ENCODE measurements at regions of chr7 and their contacts with region 1.

Region 1: DNA sequence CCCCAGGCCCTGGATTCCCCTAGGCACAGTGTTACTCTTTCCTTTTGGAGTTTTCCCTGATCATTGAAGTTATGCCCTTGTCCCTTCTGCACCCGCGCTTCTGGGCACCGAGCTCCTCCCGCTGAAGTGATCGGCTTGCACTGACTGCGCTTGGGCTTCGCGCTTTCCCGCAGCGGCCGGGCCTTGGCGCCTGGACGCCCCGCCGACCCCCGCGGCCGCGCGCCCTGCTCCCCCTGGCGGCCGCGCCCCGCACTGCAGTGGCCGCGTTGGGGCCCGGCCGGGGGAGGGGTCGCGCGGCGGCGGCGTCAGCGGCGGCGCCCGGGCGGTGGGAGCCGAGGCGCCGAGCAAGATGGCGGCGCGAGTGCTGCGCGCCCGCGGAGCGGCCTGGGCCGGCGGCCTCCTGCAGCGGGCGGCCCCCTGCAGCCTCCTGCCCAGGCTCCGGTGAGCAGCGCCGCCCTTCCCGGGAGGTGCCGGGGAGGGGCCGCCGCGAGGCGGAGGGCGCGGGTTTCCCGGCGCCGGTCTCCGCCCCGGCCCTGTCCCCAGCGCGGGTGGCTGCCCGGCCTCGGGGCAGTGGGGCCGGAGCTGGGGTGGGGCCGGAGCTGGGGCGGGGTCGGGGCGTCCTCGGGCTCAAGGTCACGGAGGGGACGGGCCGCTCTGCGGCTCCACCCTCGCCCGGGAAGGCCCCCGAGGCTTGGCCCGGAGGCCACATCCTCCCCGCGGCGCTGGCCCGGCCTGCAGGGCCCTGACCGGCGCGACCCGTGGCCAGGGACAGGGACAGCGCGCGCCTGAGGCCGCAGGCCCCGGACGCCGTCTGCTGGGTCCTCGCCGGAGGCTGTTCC is at the start of gene NIPSNAP2:
- DNase-seq: peak; percentile 46
- H3K4me3 Mint-ChIP-seq: peak within 1 kb of the TSS; percentile 77
- H3K27ac Mint-ChIP-seq: peak within 1 kb of the TSS; percentile 79
- H3K4me1 Mint-ChIP-seq: peaks cover 36% of the 10 kb centered on the region
- H3K27me3 Mint-ChIP-seq: no peaks in the 10 kb centered on the region
- total RNA-seq, gene NIPSNAP2: 57.3 to 57.6 TPM

Region 2: GRCh38 chr7:55898287-55898686 is 66.2 kb before region 1 on chr7:
- CTCF ChIA-PET with region 1: no interaction called
- intact Hi-C with region 1: no loop called
- DNase-seq: no peak
- H3K4me3 Mint-ChIP-seq: no peak overlapping the region
- H3K27ac Mint-ChIP-seq: no peak overlapping the region
- H3K4me1 Mint-ChIP-seq: no peaks in the 10 kb centered on the region
- H3K27me3 Mint-ChIP-seq: no peaks in the 10 kb centered on the region

Region 3: DNA sequence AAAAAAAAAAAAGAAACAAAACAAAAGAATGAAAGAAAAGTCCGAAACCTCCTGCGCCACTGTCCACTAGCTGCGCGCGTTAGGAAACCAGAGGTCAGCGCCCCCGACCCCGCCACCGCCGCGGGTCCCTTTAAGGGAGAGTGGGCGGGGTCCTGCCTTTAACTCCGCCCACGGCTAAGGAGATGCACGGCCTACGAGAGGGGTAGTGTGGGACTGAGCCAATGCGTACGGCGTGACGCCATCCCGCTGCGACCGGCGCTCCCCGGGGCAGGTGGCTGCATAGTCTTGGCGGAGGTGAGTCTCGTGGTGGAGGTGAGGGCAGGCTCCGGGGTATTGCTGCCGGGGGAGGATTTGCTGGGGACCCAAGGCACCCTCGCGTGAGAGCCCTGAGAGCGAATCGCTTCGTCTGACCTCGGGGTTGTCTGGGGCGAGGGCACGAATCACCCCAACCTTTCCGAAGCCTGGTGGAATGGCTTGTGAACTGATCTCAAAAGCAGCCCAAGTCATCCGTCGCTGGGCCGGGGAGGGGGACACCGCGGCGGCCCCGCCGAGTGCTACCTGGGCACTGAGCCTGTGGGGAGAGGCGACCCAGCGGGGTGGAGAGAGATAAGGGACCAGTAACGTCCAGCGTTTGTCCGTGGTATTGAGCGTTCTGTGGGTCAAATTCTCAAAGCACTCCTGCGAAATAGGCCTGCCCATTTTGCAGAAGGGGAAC is 12.7 kb before region 1 on chr7 and contains the start of gene MRPS17:
- CTCF ChIA-PET with region 1: interaction called, 16 read pairs
- intact Hi-C with region 1: loop called (anchors 1 kb)
- DNase-seq: peak; percentile 96
- H3K4me3 Mint-ChIP-seq: peak within 1 kb of the TSS; percentile 99
- H3K27ac Mint-ChIP-seq: peak within 1 kb of the TSS; percentile 94
- H3K4me1 Mint-ChIP-seq: peaks cover 28% of the 10 kb centered on the region
- H3K27me3 Mint-ChIP-seq: peaks cover 2% of the 10 kb centered on the region
- total RNA-seq, gene MRPS17: 17.3 to 18.7 TPM

Measured in activated naive CD4-positive, alpha-beta T cell treated with anti-CD3 and anti-CD28 coated beads for 36 hours (primary cell).